PC-9 (cell line): ENCODE measurements at regions of chr11 and their contacts with region 1.

Region 1: DNA sequence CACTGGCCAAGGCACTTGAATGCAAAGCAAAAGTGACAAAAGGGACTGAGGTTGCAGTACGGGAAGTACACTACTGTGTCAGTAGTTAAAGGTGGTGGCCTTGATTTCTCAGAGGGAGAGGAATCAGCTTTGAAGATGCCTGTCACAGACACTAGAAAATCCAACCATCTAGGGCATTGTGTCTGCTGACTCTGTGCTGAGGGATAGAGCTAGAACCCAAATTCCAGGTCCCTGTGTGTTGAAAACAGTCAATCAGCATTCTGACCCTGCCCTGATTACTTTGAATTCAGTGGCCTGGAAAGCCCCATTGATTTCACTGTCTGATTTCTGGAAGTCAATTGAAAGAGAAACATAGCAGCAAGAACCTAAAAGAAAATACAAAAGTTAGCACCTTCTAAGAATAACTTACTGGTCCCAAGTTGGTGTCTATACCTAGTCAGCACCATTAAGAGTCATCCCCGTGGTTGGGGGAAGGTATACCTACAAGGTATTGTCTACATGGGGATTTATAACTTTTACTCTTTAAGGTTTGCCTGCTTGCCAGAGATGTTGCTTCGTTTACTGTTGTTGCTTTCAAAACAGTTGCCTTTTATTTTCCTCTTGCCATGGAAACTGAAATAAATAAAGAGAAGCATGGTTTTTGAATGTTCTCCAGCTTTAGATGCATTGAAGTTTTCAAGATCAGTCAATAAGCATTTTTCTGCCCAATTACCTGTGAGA is 97.3 kb downstream of the PDHX start:
- DNase-seq: no peak
- H3K4me3 ChIP-seq: no peak overlapping the region
- H3K27ac ChIP-seq: no peak overlapping the region
- H3K4me1 ChIP-seq: peaks cover 56% of the 10 kb centered on the region
- H3K27me3 ChIP-seq: no peaks in the 10 kb centered on the region
- CTCF ChIP-seq: no peak

Region 2: DNA sequence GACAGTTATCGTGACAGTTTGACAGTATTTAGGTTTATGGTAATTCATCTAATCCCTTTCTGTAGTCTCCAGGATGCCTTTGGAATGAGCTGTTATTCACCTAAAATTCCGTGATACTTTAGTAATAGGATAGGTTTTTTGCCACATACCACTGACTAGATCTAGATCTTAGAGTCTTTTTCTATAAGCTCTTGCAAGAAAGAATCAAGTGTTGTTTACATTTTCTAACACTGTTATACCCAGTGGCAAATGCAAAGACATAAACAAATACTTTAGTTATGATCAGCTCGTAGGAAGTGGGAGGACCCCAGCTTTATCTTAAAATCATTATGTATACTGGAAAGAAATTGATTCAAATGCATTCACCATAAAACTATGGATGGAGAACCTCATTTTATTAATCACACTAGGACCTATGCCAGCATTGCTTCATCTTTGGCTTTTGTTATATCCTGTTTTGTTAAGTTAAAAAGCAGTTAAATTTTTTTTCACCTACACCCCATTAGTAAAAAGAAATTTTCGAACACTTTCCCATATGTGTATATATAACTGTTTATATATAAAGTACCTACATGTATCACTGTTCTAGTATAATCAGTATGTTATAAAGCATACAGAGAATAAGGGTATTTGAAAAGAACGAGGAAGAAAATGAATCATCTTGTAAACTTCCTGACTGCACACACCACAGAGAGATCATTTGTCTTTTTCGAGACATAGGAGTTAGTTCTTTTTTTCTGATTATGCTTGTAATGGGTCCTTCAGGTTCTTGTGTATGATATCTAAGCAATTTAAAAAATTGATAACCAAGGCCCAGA is 36.4 kb before region 1 on chr11:
- CTCF ChIA-PET with region 1: no interaction called
- POLR2A ChIA-PET with region 1: interaction called, 4 read pairs
- intact Hi-C with region 1: loop called (anchors 1 kb)
- DNase-seq: peak in 1 of 2 experiments; percentile 99
- H3K4me3 ChIP-seq: peak overlapping the region; percentile 22; the same call in 1 of the 2 replicates
- H3K27ac ChIP-seq: peak overlapping the region; percentile 77
- H3K4me1 ChIP-seq: peaks cover 58% of the 10 kb centered on the region
- H3K27me3 ChIP-seq: no peaks in the 10 kb centered on the region
- CTCF ChIP-seq: no peak

Region 3: GRCh38 chr11:35030716-35031213 is 17.1 kb after region 1 on chr11:
- CTCF ChIA-PET with region 1: interaction called, 4 read pairs
- POLR2A ChIA-PET with region 1: interaction called, 10 read pairs
- intact Hi-C with region 1: no loop called
- DNase-seq: peak; percentile 66 to 95
- H3K4me3 ChIP-seq: peak overlapping the region; percentile 8; the same call in 1 of the 2 replicates
- H3K27ac ChIP-seq: peak overlapping the region; percentile 85
- H3K4me1 ChIP-seq: peaks cover 49% of the 10 kb centered on the region
- H3K27me3 ChIP-seq: no peaks in the 10 kb centered on the region
- CTCF ChIP-seq: no peak

Region 4: DNA sequence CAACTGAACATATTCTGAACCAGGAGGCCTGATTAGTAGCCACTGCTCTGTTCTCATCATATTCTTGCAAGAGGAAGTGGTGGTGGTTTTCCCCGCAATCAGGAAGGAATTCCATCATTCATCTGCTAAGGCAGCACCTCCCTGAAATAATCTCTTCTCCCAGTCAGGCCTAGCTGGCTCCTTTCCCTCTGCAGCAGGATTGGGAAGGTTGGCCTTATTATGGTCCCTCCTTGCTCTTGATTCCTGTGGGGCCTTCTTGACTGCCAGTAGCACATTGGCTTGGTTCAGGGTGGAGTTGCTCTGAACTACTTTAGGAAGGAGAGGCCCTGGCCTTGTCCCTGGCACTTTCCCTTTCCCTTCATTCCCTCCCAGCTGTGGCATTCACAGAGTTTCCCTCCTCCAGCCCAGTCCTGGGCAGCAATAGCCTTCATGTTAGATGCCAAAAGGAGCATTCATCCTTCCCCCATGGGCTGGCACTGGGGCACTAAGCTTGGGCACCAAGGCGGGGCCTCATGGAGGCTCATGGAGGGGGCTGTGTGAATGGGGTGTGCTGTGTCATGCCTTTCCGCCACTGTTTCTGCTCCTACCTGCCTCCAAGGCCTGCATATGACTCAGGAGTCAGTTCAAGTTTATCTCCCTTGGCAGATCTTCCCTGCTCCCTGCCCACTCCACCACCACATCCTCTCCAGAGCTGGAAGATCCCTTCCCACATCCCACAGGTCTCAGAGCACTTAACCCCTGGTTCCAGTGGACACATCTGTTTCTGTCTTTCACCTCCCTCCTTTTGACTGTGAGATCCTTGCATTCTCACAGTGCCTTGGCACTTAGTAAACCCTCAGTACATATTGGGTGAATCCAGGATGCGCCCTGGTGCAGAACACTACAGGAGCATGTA is 97.7 kb after region 1 on chr11:
- CTCF ChIA-PET with region 1: no interaction called
- POLR2A ChIA-PET with region 1: interaction called, 7 read pairs
- intact Hi-C with region 1: loop called (anchors 1 kb)
- DNase-seq: peak; percentile 87 to 88
- H3K4me3 ChIP-seq: no peak overlapping the region
- H3K27ac ChIP-seq: peak overlapping the region; percentile 82
- H3K4me1 ChIP-seq: peaks cover 43% of the 10 kb centered on the region
- H3K27me3 ChIP-seq: no peaks in the 10 kb centered on the region
- CTCF ChIP-seq: no peak

Region 5: GRCh38 chr11:35173011-35173511 is 159.4 kb after region 1 on chr11:
- CTCF ChIA-PET with region 1: interaction called, 3 read pairs
- POLR2A ChIA-PET with region 1: no interaction called
- intact Hi-C with region 1: loop called (anchors 1 kb)
- DNase-seq: peak; percentile 60 to 98
- H3K4me3 ChIP-seq: peak overlapping the region; percentile 33
- H3K27ac ChIP-seq: peak overlapping the region; percentile 92
- H3K4me1 ChIP-seq: peaks cover 95% of the 10 kb centered on the region
- H3K27me3 ChIP-seq: no peaks in the 10 kb centered on the region
- CTCF ChIP-seq: no peak